Endothelial cell of umbilical vein (primary cell): ENCODE measurements at regions of chr7 and their contacts with region 1.

Region 1: GRCh38 chr7:5557920-5558401 is 134.3 kb upstream of the TNRC18 start:
- DNase-seq: no peak
- H3K4me3 ChIP-seq: no peak overlapping the region
- H3K27ac ChIP-seq: no peak overlapping the region
- H3K4me1 ChIP-seq: peaks cover 20% of the 10 kb centered on the region
- H3K27me3 ChIP-seq: no peaks in the 10 kb centered on the region
- CTCF ChIP-seq: no peak
- POLR2A ChIP-seq: no peak

Region 2: DNA sequence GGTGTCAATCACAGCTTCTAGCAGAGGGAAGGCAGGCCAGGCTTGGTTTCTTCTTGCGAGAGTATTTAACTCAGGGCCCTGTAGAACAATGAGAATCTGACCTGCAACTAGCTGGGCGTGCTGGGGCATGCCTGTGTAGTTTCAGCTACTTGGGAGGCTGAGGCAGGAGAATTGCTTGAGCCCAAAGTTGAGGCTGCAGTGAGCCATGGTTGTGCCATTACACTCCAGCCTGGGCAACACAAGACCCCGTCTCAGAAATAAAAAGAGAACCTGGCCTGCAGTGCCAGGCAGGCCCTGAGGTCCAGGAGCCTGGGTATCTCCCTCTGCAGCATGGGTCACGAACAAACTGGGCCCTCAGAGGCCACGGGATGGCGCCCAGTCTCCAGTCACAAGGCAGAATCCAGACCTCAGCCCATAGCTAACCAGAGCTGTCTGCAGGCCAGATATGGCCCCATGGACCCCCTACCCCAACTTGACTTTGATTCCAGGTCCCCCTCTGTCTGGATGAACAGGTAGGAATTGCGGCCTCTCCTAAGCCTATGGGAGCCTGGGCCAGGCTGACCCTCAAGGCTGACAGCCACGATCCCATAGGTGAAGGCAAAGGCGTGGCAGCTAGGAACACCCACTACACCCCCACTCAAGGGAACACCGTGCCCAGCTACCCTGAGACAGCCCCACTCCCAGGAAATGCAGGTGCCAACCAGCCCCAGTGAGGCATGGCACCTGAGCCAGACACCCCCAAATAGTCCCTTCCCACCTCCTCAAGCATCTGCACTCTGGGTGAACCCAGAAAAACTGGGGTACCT is 31.7 kb before region 1 on chr7:
- CTCF ChIA-PET with region 1: interaction called, 10 read pairs
- POLR2A ChIA-PET with region 1: interaction called, 8 read pairs
- dilution Hi-C with region 1: no loop called
- intact Hi-C with region 1: no loop called
- DNase-seq: peak; percentile 34
- H3K4me3 ChIP-seq: no peak overlapping the region
- H3K27ac ChIP-seq: no peak overlapping the region
- H3K4me1 ChIP-seq: peaks cover 3% of the 10 kb centered on the region
- H3K27me3 ChIP-seq: no peaks in the 10 kb centered on the region
- CTCF ChIP-seq: no peak
- POLR2A ChIP-seq: peak; percentile 69

Region 3: DNA sequence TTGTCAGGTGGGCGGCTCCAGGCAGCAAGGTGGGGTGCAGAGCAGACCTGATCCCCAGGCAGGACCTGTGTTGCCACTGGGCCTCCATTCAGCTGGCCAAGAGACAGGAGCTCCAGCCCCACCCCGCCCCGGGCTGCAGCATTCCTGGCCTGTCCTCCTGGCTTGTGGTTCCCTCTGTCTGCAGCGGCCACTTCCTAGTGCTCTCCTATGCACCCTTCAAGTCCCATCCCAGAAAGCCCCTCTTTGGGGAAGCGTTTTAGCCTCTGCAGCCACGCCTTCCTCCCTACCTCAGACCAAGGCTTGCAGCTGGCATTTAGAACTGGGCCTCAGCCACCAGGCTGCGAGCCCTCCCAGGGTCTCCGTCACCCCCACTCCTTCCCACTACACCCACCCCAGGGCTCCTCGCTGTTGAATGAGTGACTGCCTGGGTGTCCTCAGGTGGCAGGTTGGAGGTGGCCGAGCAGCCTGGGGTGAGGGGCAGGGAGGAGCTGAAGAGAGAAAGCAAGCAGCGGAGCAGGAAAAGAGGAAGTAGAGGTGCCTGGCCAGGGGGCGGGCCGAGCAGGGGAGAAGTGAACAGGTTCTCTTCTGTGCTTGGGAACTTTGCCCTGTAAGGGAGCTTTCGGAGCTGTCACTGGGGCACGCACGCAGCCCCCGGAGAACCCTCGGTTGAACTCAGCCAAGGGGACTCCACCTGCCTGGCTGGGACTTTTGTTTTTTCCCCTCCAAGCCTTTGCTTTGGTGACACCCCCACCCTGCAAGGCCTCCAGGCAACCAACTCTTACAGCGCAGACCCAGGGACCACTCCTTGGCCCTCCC is 25.2 kb before region 1 on chr7:
- CTCF ChIA-PET with region 1: interaction called, 15 read pairs
- POLR2A ChIA-PET with region 1: no interaction called
- dilution Hi-C with region 1: no loop called
- intact Hi-C with region 1: no loop called
- DNase-seq: no peak
- H3K4me3 ChIP-seq: no peak overlapping the region
- H3K27ac ChIP-seq: no peak overlapping the region
- H3K4me1 ChIP-seq: peaks cover 8% of the 10 kb centered on the region
- H3K27me3 ChIP-seq: no peaks in the 10 kb centered on the region
- CTCF ChIP-seq: no peak
- POLR2A ChIP-seq: no peak